ENCODE measurements at regions of chrX and their contacts with region 1.

Region 1: DNA sequence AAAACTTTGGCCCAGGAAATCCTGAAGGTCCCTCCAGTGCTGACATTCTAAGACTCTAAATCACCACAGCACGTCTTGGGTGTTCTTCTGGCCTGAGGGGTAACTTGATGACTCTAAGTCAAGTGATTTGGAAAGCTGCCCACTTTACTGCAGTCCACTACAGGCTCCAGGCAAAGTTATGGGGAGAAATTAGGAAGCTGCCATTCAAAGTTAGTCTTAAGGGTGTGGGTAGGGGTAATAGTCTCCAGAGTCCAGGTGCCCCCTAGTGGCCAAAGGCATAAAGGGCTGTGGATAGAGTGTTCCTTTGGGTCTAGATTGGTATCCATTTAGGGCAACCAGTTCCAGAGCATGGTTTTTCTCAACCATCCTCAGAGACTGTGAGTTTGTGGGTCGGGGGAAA is 38.7 kb upstream of the SLC16A2 start:
- DNase-seq: peak; percentile 43
- H3K4me3 ChIP-seq: no peak overlapping the region
- H3K27ac ChIP-seq: no peak overlapping the region
- H3K4me1 ChIP-seq: no peaks in the 10 kb centered on the region
- CTCF ChIP-seq: peak; percentile 75

Region 2: GRCh38 chrX:74421036-74421739 is 38.6 kb after region 1 on chrX and contains the start of gene SLC16A2:
- CTCF ChIA-PET with region 1: no interaction called
- POLR2A ChIA-PET with region 1: no interaction called
- intact Hi-C with region 1: no loop called
- DNase-seq: no peak
- H3K4me3 ChIP-seq: no peak within 1 kb of the TSS
- H3K27ac ChIP-seq: no peak within 1 kb of the TSS
- H3K4me1 ChIP-seq: no peaks in the 10 kb centered on the region
- CTCF ChIP-seq: no peak
- total RNA-seq, gene SLC16A2: not detected in 2 replicates

Region 3: DNA sequence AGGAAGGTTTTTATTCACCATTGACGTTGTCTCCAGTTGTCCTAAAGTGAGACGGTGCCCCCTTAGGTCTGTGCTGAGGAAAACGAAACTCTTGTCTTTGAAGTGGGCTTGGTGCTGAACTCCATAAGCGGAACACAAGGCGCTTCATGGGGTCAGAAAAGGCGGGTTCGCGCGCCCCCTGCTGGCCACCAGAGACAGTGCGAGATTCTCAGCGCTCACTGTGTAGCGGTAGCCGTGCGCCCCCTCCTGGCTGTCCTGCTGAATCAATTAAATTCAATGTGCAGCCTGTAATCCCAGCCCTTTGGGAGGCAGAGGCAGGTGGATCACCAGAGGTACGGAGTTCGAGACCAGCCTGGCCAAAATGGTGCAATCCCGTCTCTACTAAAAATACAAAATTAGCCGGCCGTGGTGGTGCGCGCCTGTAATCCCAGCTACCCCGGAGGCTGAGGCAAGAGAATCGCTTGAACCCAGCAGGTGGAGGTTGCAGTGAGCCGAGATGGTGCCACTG is 167.7 kb after region 1 on chrX:
- CTCF ChIA-PET with region 1: no interaction called
- POLR2A ChIA-PET with region 1: no interaction called
- intact Hi-C with region 1: loop called (anchors 5 kb)
- DNase-seq: peak; percentile 80
- H3K4me3 ChIP-seq: peak overlapping the region; percentile 34
- H3K27ac ChIP-seq: no peak overlapping the region
- H3K4me1 ChIP-seq: no peaks in the 10 kb centered on the region
- CTCF ChIP-seq: peak; percentile 90

Region 4: GRCh38 chrX:74636749-74637314 is 254.2 kb after region 1 on chrX:
- CTCF ChIA-PET with region 1: no interaction called
- POLR2A ChIA-PET with region 1: no interaction called
- intact Hi-C with region 1: no loop called
- DNase-seq: no peak
- H3K4me3 ChIP-seq: no peak overlapping the region
- H3K27ac ChIP-seq: no peak overlapping the region
- H3K4me1 ChIP-seq: no peaks in the 10 kb centered on the region
- CTCF ChIP-seq: no peak